AG04449 (cell line): ENCODE measurements at regions of chr4 and their contacts with region 1.

Region 1: DNA sequence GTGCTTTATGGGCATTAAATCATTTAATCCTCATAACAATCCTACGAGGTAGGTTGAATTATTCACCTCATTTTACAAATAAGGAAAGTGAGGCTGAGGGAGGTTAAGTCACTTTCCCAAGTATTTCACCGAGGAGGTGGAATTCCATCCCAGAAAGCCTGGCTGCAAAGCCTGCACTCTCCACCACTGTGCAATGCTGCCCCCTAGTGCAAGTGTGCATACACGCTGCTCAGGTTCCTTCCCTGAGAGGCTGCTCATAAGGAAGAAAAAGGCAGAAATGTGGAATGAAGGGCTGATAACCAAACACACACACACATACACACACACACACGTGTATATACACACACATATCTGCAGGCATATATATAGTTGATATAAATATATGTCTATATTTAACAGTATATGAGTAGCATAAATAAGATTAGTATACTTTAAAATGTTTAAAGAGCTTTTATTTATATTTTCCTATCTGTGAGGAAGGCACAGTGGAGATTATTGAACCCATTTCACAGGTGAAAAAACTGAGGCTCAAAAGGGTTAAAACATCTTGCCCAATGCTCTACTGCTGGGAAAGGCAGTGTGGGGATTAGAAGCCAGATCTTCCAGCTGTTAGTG is 714.5 kb upstream of the TENM3 start:
- DNase-seq: peak; percentile 19
- H3K4me3 ChIP-seq: no peak overlapping the region
- CTCF ChIP-seq: peak; percentile 92

Region 2: DNA sequence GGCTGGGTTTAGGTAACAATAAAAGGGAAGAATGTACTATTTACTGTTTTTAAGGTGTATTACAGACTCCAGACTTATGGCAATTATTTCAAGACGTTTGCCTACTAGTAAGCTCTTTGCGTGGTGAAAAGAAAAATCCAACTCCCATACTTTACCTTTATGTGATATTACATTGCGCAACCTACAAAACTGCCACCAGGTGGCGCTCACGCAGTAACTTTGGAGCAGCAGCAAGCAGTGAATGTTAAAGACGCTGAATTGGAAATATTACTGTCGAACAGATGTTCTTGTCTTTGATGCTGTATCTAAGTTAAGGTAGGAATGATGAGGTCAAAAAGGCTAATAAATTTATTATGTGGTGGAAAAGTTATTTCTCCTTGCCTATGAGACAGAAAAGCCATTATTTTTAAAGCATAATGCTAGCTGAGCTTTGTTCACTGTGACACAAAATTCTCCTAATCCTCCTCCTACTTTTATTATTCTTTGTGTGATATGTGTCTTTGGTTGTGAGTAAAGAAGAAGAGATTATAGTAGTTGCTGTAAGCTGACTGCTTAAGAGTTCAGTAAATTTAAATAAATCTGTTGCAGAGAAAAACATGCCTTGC is 385.3 kb before region 1 on chr4:
- CTCF ChIA-PET with region 1: interaction called, 74 read pairs
- POLR2A ChIA-PET with region 1: no interaction called
- DNase-seq: peak; percentile 4
- H3K4me3 ChIP-seq: no peak overlapping the region
- CTCF ChIP-seq: peak; percentile 79

Region 3: DNA sequence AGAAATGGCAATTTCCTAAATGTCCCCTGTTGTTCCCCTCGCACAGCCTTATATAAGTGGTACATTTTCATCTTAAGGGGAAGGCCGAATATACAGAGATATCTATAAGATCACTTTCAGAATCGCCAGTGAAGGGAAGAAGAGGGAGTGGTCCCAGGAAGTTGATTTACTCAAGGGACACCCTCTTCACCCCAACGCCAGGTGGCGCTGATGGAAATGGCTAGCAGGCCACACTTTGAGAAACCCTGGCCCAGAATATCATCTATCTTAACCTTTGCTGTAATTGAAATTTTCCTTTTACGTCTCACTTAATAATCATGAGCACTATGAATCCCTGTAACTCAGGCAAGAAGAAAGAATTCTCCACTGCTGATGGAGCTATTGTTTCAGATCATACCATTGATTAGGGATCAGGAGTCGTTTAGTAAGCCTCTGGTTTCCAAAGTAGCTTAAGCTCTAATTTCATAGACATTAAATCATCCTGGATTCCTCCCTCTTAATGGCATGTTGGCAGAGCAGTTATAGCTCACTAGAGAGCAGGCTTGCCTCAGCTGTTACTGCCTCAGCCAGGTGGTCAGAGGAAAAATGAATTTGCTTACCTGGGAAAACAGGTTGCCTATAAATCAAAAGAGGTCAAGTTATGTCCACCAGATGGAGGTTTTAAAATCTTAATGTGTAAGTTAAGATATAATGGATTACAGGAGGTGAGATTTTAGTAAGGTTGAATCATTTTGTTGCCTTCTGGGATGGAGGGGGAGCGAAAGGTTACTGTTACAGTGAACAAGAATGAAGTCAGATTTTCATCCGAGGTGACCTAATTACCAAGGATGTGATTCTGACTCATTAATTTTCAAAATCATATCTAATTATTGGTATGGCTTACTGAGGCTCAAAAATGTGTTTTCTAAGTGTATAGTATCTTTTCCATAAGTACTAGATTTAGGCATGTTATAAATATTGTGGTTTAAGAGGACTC is 226.7 kb before region 1 on chr4:
- CTCF ChIA-PET with region 1: interaction called, 42 read pairs
- POLR2A ChIA-PET with region 1: no interaction called
- DNase-seq: no peak
- H3K4me3 ChIP-seq: no peak overlapping the region
- CTCF ChIP-seq: peak; percentile 65

Region 4: DNA sequence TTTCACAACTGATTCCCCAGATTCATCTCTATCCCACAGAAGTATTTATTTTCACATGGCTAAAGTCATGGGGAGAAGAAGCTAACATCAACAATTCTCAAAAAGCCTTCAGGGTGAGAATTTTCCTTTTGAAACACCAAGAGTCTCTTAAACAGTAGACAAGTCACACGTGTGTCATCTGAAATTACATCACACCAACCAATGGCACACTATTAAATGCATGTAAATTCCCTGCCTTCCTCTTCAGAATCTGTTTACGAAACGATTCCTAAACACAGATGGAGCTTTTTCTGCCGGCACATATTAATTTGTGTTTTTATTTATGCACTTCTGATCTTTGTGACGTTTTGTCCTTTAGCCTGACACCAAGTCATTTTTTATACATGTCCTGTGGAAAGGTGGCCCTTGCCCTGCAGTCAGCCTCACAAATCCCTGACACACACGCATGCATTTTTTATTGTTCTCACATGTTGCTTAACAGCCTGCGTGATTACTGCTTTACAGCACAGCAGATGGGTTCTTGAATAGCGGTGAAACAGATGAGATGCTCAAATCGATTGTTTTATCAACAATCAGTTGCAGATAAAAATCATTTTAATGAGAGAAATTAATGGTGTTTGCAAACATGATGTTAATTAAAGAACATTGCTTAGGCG is 21.4 kb before region 1 on chr4:
- CTCF ChIA-PET with region 1: interaction called, 15 read pairs
- POLR2A ChIA-PET with region 1: no interaction called
- DNase-seq: no peak
- H3K4me3 ChIP-seq: no peak overlapping the region
- CTCF ChIP-seq: no peak

Region 5: DNA sequence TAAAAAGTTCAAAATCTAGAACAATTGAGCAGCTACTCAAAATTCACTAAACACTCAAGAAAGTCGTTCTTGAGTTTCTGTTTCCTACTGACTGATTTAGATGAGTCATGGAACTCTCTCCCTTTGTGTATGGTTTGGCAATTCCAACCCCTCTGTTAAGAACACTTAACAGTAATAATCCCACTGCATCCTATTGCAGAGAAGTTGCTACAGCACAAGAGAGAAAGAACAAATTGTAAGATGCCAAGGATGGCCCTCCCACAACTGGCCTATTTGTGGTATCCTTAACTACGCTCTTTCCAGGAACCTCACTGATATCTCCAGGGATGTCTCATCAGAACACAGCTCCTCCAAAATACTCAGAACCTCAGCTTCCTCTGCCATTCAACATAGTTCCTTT is 12.7 kb after region 1 on chr4:
- CTCF ChIA-PET with region 1: interaction called, 32 read pairs
- POLR2A ChIA-PET with region 1: no interaction called
- DNase-seq: no peak
- H3K4me3 ChIP-seq: no peak overlapping the region
- CTCF ChIP-seq: no peak